Activated CD4-positive, alpha-beta T cell treated with anti-CD3 and anti-CD28 coated beads, Interleukin-2, amount 10 ng/mL, durations not matched to agents 24 days and 14 days (primary cell): ENCODE measurements at regions of chr18 and their contacts with region 1.

Region 1: GRCh38 chr18:57630002-57630753 is 8.5 kb upstream of the NARS1 start:
- DNase-seq: peak; percentile 98
- H3K4me3 Mint-ChIP-seq: peak overlapping the region; percentile 98
- H3K27ac Mint-ChIP-seq: peak overlapping the region; percentile 94
- H3K4me1 Mint-ChIP-seq: peaks cover 14% of the 10 kb centered on the region
- H3K27me3 Mint-ChIP-seq: no peaks in the 10 kb centered on the region

Region 2: GRCh38 chr18:57859314-57859713 is 229.1 kb after region 1 on chr18:
- intact Hi-C with region 1: loop called (anchors 1 kb)
- DNase-seq: no peak
- H3K4me3 Mint-ChIP-seq: no peak overlapping the region
- H3K27ac Mint-ChIP-seq: no peak overlapping the region
- H3K4me1 Mint-ChIP-seq: no peaks in the 10 kb centered on the region
- H3K27me3 Mint-ChIP-seq: peaks cover 5% of the 10 kb centered on the region

Region 3: GRCh38 chr18:58117786-58118403 is 487.7 kb after region 1 on chr18:
- intact Hi-C with region 1: loop called (anchors 10 kb)
- DNase-seq: no peak
- H3K4me3 Mint-ChIP-seq: no peak overlapping the region
- H3K27ac Mint-ChIP-seq: no peak overlapping the region
- H3K4me1 Mint-ChIP-seq: peaks cover 9% of the 10 kb centered on the region
- H3K27me3 Mint-ChIP-seq: peaks cover 3% of the 10 kb centered on the region